Psoas muscle (tissue), 8 donors: ENCODE measurements at regions of chr15 and their contacts with region 1.

Region 1: GRCh38 chr15:67201136-67201535 is 53.3 kb downstream of the AAGAB start:
- DNase-seq: no peak
- ATAC-seq: no peak
- H3K4me3 ChIP-seq: no peak overlapping the region
- H3K27ac ChIP-seq: peak overlapping the region; percentile 90
- H3K4me1 ChIP-seq: peaks cover 70% of the 10 kb centered on the region
- H3K27me3 ChIP-seq: no peaks in the 10 kb centered on the region
- CTCF ChIP-seq: no peak

Region 2: GRCh38 chr15:66862878-66863335 is 338.2 kb before region 1 on chr15:
- intact Hi-C with region 1: no loop called
- DNase-seq: peak; percentile 79 to 87
- ATAC-seq: peak; percentile 81 to 94 (median 90)
- H3K4me3 ChIP-seq: no peak overlapping the region
- H3K27ac ChIP-seq: no peak overlapping the region
- H3K4me1 ChIP-seq: no peaks in the 10 kb centered on the region
- H3K27me3 ChIP-seq: peaks cover 0 to 6% (median 0%) of the 10 kb centered on the region in 3 donors
- CTCF ChIP-seq: peak; percentile 85

Region 3: DNA sequence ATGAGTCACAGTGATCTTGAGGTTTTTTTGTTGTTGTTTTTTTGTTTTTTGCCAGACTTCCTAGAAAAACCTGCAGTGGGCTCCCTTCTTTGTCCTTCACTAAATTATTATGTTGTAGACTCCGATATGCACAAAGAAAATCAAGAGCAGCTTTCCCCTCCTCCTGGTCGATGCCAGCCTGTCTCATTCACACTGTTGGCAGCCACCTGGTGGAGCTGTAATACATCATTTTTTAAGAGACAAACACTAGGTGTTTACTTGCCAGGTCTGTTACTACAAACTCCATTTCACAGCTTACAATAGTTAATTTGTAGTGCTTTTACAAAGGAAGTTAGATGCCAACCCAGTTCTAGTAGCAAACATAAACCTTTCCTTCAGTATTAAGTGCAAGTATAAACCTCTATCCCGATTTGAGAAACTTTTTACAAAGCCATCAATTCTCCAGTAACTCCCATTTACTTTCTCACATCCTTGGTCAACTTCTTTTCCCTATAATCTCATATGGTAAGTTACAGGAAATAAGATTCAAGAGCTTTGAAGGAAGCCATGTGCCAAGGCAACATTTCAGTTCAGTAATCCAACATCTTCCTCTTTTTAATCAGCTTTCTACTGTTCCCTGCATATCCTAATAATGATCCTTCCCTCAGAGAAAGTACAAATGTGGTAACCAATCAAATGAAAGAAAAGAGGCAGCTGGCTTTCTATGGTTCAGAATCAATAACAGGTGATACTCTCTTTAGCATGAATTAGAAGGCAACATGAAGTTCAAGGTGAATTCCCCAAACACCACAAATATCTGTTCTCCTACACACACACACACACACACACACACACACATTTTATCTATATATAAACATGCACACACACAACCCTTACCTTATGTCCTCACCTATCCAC is 39.3 kb after region 1 on chr15:
- intact Hi-C with region 1: loop called in 1 of 2 experiments (anchors 5 kb)
- DNase-seq: no peak
- ATAC-seq: peak in 3 of 4 donors; percentile 54 to 73 (median 62)
- H3K4me3 ChIP-seq: no peak overlapping the region
- H3K27ac ChIP-seq: no peak overlapping the region
- H3K4me1 ChIP-seq: peaks cover 21% of the 10 kb centered on the region
- H3K27me3 ChIP-seq: no peaks in the 10 kb centered on the region
- CTCF ChIP-seq: peak; percentile 23

Region 4: DNA sequence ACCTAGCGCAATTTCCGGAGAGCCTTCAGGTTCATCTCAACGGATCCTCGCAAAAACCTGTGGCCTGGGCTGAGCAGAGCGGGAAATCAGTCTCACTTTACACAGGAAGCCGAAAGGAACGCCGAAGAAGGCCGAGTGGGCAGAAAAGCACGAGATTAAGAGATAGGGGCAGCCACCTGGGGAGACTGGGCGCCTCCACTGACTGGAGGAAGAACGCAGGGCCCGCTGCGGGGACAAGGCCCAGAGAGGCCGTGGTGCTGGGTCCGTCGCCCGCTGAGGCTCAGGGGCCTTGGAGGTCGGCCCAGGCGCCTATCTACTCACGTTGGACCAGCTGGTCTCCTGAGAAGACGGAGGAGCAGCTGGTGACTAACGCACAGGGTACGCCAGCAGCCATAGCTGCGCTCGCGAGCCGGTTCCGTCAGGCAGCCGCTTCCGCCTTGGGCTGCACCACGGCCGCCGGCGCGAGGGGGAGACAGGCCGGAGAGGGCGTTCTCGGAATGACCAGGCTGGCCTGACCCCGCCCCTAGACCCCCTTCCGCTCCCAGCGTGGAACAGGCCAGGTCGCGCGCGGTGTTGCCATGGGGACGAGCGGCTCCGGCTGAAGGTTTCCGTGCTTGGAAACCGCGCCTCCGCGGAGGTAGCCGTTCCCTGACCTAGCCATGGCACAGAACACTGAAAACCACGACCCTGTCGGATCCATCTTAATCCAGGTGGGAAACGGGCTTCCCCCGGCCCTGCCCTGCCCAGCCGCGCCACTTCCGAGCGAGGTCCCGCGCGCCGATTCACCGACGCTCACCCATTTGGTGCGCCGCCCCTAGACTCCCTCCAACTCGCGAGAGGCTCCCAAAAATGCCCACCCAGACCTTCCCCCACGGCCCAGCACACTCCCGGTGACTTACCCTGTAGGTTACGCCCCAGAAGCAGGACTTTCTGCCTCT is 53.4 kb after region 1 on chr15 and contains the starts of genes AAGAB and IQCH:
- intact Hi-C with region 1: loop called in 1 of 2 experiments (anchors 5 kb)
- DNase-seq: peak; percentile 99
- ATAC-seq: peak; percentile 96 to 99 (median 98)
- H3K4me3 ChIP-seq: peak within 1 kb of the TSS; percentile 87
- H3K27ac ChIP-seq: peak within 1 kb of the TSS; percentile 94
- H3K4me1 ChIP-seq: peaks cover 18% of the 10 kb centered on the region
- H3K27me3 ChIP-seq: no peaks in the 10 kb centered on the region
- CTCF ChIP-seq: no peak
- total RNA-seq, gene AAGAB: 34.3 to 46.1 (median 42.7) TPM
- total RNA-seq, gene IQCH: 0.37 to 1.0 (median 0.75) TPM